ENCODE measurements at regions of chr4 and their contacts with region 1.

Region 1: DNA sequence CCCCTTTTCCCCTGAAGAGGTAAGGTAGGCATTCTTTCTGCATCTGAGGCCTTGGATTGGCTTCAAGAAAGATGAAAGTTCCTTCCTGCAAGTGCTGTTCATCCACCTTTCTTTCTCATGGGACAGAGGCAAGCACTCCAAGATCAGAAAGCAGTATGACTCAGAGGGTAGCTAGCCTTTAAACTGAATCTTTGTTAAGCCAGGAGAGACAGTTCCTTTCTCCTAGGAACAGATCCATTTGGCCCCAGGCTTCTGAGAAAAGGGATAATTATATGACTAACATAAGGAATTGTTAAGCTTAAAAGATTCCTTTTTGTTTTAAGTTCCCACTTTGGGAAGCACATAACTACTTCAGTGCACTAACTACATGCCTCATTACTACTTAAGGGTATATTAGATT is 192.0 kb downstream of the PPP3CA start:
- DNase-seq: no peak
- ATAC-seq: no peak
- H3K4me3 Mint-ChIP-seq: no peak overlapping the region
- H3K27ac Mint-ChIP-seq: no peak overlapping the region
- H3K4me1 Mint-ChIP-seq: peaks cover 36% of the 10 kb centered on the region
- H3K27me3 Mint-ChIP-seq: no peaks in the 10 kb centered on the region

Region 2: GRCh38 chr4:100823066-100823992 is 332.0 kb before region 1 on chr4:
- CTCF ChIA-PET with region 1: no interaction called
- POLR2A ChIA-PET with region 1: no interaction called
- intact Hi-C with region 1: loop called in 1 of 2 experiments (anchors 1 kb)
- DNase-seq: peak; percentile 49
- ATAC-seq: peak; percentile 83
- H3K4me3 Mint-ChIP-seq: no peak overlapping the region
- H3K27ac Mint-ChIP-seq: peak overlapping the region; percentile 22
- H3K4me1 Mint-ChIP-seq: peaks cover 13% of the 10 kb centered on the region
- H3K27me3 Mint-ChIP-seq: peaks cover 2% of the 10 kb centered on the region

Region 3: GRCh38 chr4:101020956-101021355 is 134.4 kb before region 1 on chr4:
- CTCF ChIA-PET with region 1: no interaction called
- POLR2A ChIA-PET with region 1: interaction called, 5 read pairs
- intact Hi-C with region 1: loop called (anchors 1 to 5 kb)
- DNase-seq: no peak
- ATAC-seq: peak; percentile 70
- H3K4me3 Mint-ChIP-seq: no peak overlapping the region
- H3K27ac Mint-ChIP-seq: peak overlapping the region; percentile 64
- H3K4me1 Mint-ChIP-seq: peaks cover 50% of the 10 kb centered on the region
- H3K27me3 Mint-ChIP-seq: no peaks in the 10 kb centered on the region

Region 4: DNA sequence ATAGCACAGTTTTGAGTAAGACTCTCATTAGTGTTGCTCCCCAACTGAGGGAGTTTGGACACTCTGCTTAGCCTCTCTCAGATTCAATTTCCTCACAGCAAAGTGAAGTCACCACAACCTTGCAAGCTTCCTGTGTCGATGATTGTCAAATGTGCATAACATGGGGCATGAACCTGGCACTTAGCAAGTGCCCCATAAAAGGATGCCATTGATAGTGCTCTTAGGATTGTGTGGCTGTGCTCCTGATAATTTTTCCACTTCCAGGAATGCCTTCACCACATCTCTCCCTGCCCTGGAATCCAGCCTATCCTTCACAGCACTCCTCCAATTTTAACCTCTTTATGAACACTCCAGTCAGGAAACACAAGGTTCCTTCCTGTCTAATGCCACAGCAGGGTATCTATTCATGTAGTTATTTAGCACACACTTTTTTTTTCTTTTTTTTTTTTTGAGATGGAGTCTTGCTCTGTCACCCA is 117.4 kb before region 1 on chr4:
- CTCF ChIA-PET with region 1: interaction called, 3 read pairs
- POLR2A ChIA-PET with region 1: no interaction called
- intact Hi-C with region 1: loop called (anchors 1 kb)
- DNase-seq: peak; percentile 23
- ATAC-seq: peak; percentile 67
- H3K4me3 Mint-ChIP-seq: no peak overlapping the region
- H3K27ac Mint-ChIP-seq: no peak overlapping the region
- H3K4me1 Mint-ChIP-seq: peaks cover 24% of the 10 kb centered on the region
- H3K27me3 Mint-ChIP-seq: no peaks in the 10 kb centered on the region

Region 5: DNA sequence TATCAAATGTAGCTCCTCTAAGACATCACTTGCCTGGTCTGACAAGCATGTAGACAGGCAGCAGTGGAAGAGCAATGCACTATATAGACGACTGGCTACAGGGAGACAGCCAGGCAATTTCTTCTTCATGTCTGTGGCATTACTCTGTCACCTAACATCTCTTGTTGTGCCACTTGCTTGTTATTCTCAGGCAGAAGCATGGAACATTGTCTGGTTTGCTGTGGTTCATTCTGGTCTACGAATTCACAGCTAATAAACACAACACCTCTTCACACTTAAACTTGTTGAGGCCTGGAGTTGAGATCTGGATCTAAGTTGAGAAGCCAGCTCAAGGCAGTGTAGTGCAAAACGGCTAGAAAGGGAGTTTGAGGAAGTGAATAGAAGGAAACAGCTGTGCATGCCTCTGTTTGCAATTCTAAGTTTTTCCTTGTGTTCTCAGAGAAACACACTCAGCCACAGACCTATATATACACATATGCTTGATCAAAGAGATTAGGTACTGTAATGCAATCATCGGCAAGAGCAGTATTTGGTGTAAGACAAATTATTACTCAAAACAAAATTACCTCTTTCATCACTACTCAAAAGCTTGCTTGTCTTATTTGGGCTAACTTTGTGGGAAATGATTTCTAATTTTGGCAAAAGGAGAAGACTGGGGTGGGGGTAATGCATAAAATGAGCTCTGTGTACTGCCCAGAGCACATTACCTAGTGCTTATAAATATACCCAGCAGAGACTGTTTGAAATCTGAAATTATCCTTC is 51.8 kb before region 1 on chr4:
- CTCF ChIA-PET with region 1: interaction called, 3 read pairs
- POLR2A ChIA-PET with region 1: no interaction called
- intact Hi-C with region 1: loop called in 1 of 2 experiments (anchors 2 kb)
- DNase-seq: no peak
- ATAC-seq: peak; percentile 71
- H3K4me3 Mint-ChIP-seq: no peak overlapping the region
- H3K27ac Mint-ChIP-seq: no peak overlapping the region
- H3K4me1 Mint-ChIP-seq: peaks cover 24% of the 10 kb centered on the region
- H3K27me3 Mint-ChIP-seq: no peaks in the 10 kb centered on the region

Region 6: GRCh38 chr4:102007959-102008425 is 852.6 kb after region 1 on chr4:
- CTCF ChIA-PET with region 1: no interaction called
- POLR2A ChIA-PET with region 1: no interaction called
- intact Hi-C with region 1: loop called in 1 of 2 experiments (anchors 5 kb)
- DNase-seq: peak; percentile 20
- ATAC-seq: peak; percentile 95
- H3K4me3 Mint-ChIP-seq: no peak overlapping the region
- H3K27ac Mint-ChIP-seq: no peak overlapping the region
- H3K4me1 Mint-ChIP-seq: peaks cover 15% of the 10 kb centered on the region
- H3K27me3 Mint-ChIP-seq: peaks cover 2% of the 10 kb centered on the region